ENCODE measurements at regions of chr14 and their contacts with region 1.

Region 1: DNA sequence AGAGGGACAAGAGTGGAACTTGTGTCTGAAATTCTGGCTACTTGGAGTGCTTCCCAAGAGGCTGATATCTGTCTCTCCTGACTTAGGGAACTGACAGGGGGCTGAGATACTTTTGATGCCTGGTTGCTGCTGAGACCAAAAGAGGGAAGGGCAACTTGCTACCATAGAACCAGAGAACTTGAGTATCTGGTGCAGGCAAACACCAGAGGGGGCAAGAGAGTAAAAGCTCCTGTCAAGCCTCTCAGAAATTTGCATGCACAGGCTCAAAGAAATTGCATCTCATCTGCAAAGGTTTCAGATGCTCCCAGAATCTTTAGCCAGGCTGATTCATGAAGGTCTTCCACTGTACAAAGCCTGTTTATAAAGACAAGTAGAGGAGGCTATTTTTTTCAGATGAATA is 391.3 kb upstream of the FOXG1 start:
- DNase-seq: no peak
- ATAC-seq: no peak
- H3K4me3 ChIP-seq: no peak overlapping the region
- H3K27ac ChIP-seq: no peak overlapping the region
- H3K4me1 ChIP-seq: no peaks in the 10 kb centered on the region
- H3K27me3 ChIP-seq: no peaks in the 10 kb centered on the region
- CTCF ChIP-seq: peak in 1 of 12 donors; percentile 18
- POLR2A ChIP-seq: no peak

Region 2: GRCh38 chr14:28361486-28361885 is 13.8 kb before region 1 on chr14:
- intact Hi-C with region 1: loop called in 1 of 10 experiments (anchors 2 kb)
- DNase-seq: no peak
- ATAC-seq: no peak
- H3K4me3 ChIP-seq: no peak overlapping the region
- H3K27ac ChIP-seq: no peak overlapping the region
- H3K4me1 ChIP-seq: no peaks in the 10 kb centered on the region
- H3K27me3 ChIP-seq: no peaks in the 10 kb centered on the region
- CTCF ChIP-seq: no peak
- POLR2A ChIP-seq: no peak

Measured in heart left ventricle (tissue), 16 donors.